A549 (cell line): ENCODE measurements at regions of chr2 and their contacts with region 1.

Region 1: DNA sequence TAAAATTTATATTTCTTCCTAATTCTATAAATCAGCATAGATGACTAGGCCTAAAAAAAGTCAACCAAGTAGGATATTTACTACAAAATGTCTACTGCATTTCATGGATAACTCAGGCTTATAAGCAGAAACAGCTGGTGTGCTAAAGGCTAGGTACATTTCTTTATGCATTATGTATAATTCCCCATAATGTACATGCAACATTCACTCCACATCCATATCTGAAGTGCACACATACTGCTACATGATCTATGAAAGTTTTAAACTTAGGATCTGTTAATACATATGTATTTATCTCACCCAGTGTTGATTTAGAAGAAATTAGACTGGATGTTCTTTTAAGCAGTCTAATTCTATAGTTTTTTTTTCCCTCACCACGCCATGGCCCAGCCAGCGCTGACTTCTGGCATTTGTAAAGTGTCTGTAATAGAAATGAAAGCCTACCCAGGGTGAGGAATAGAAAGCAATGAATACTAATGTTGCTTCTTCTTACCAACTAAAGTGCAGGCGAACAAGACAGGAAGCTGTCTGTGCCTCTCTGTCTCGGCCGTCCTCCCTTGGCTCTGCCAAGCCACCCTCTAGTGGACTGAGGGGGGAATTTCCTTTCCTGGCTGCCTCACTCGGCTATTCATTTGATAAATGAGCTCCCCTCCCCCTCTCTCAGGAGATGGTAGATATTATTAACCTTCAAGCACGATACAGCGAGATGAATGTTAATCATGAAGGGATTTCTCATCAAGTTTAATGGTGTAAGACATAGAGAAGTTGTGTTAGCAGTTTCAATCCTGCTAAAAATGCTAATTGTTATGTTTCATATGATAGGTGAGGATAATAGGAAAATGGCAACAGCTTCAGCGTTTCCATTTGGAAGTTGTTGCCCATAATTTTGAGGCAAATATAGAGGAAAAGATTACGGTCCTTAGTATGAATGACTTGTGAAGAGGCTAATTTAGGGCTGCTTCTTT is 384.5 kb downstream of the MTX2 start:
- DNase-seq: peak; percentile 44 to 74
- ATAC-seq: peak; percentile 97 to 98
- H3K4me3 ChIP-seq: no peak overlapping the region
- H3K27ac ChIP-seq: no peak overlapping the region
- H3K4me1 ChIP-seq: no peaks in the 10 kb centered on the region
- CTCF ChIP-seq: peak; percentile 53
- EP300 ChIP-seq: no peak
- POLR2A ChIP-seq: no peak
- RAD21 ChIP-seq: peak; percentile 38 to 49; a peak in 4 of 5 replicates

Region 2: DNA sequence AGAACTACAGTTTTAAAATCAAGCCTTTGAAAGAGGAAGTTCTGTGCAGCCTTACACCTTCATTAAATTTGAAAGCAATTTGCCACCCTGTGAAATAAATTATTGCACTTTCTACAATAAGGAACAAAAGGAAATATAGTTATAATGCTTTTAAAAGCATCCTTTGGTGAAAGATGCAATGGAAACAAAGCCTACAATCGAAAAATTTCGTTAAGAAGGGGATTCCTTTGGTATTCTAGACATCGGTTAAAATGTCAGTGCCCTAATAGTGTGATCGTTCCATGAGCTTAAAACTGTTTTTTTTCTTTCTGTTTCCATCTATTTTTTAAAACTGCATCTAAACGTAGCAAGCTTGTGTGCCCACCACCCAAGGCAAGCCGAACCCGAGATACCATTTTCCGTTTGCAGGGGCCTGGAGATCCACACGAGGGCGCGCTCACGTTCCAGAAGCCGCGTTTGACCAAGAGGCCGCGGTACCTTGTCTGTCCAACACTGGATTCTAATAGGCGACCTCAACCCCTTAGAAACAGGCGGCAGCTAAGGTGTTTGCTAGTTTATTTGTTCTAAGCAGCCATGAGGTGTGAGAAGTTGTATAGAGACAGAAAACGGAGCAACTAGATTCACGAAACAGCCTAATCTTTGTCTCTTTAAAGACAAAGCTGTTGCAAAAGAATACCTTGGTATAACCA is 542.6 kb before region 1 on chr2:
- CTCF ChIA-PET with region 1: interaction called, 12 read pairs
- POLR2A ChIA-PET with region 1: no interaction called
- DNase-seq: peak; percentile 68 to 76
- ATAC-seq: peak; percentile 12 to 67; a peak in 4 of 6 replicates
- H3K4me3 ChIP-seq: no peak overlapping the region
- H3K27ac ChIP-seq: no peak overlapping the region
- H3K4me1 ChIP-seq: peaks cover 9% of the 10 kb centered on the region
- CTCF ChIP-seq: peak; percentile 82
- EP300 ChIP-seq: no peak
- POLR2A ChIP-seq: no peak
- RAD21 ChIP-seq: peak; percentile 37; a peak in 3 of 5 replicates

Region 3: DNA sequence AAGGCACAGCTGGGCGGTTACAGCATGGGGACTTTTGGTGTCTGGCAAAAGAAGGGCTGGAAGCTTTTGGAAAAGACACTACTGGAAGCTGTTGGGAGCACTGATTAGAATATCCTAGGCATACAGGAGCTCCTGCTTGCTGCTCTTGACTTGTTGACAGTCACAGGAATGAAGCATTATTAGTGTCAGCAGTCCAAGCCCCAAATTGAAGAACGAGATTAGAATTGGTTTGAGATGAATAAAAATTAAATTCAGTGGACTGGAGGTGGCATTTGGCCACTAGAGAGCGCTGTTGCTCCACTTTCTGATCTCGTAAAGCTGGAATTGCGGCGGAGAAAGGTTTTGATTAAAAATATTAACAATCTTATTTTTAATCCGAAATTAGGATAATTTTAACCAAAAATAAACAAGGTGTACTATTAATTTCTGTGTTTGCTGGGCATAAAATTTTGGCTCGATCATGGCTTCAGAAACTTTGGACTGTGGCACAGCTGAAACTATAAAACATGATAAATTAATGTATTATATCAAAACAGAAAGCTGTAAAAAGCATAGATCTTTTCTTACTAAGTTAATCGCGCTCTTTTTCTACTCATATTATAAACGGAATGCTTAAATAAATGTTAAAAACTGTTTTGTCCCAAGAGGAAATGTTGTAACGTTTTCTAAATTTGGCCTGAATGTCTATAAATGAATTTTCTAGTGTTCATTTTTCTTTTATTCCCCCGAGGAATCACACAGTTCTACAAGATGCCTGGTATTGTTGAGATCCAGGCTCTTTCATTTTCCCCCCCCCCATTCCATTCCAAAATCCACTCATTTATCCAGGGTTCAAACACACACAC is 526.6 kb before region 1 on chr2:
- CTCF ChIA-PET with region 1: interaction called, 79 read pairs
- POLR2A ChIA-PET with region 1: interaction called, 4 read pairs
- DNase-seq: peak in 1 of 2 experiments; percentile 52
- ATAC-seq: 0 out of 6 replicates have a peak, but pooled peaks of 1 of the 2 experiments have one; percentile 10
- H3K4me3 ChIP-seq: no peak overlapping the region
- H3K27ac ChIP-seq: no peak overlapping the region
- H3K4me1 ChIP-seq: 0 out of 3 replicates have a peak, but pooled peaks cover 3% of the 10 kb centered on the region
- CTCF ChIP-seq: peak; percentile 96
- EP300 ChIP-seq: no peak
- POLR2A ChIP-seq: no peak
- RAD21 ChIP-seq: peak; percentile 87 to 91

Region 4: DNA sequence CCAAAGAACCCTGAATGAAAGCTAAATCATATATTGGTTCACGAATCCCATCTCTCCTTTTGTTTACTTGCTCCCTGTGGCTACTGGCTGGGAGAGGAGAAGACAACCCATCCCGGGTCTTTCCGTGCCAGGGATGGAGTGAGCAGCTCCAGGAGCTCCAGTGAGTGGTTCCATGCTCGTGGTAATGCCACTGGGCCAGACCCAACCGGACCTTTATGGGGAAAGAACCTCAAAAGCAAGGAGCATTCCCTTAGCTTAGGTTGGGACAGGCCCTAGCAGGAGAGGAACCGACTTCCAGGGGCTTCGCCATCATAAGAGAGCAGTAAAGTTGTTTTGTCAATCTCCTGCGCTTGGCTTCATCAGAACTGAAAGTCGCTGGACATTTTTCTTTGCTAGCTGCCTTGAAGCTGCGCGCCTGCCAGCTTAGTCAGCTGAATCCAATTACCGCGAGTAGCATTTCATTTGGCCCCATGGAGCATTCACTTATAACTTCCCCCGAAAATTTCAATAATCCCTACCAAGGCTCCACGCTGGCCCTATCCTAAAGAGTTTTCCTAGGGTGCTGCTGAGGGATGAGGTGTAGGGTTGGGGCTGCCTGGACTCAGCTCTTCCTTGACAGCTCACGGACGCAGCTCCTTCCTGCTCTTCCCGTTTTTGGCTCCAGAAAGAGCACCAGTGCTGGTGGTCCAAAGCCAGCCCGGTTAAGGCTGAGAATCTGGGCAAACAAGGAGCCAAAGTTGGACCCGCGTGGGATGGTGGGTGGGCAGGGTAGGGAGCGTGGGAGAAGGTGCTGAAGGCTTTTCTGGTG is 491.7 kb before region 1 on chr2:
- CTCF ChIA-PET with region 1: interaction called, 15 read pairs
- POLR2A ChIA-PET with region 1: no interaction called
- DNase-seq: no peak
- ATAC-seq: no peak; a peak in 1 of 6 replicates
- H3K4me3 ChIP-seq: no peak overlapping the region
- H3K27ac ChIP-seq: no peak overlapping the region
- H3K4me1 ChIP-seq: no peaks in the 10 kb centered on the region
- CTCF ChIP-seq: no peak
- EP300 ChIP-seq: no peak
- POLR2A ChIP-seq: no peak
- RAD21 ChIP-seq: no peak

Region 5: DNA sequence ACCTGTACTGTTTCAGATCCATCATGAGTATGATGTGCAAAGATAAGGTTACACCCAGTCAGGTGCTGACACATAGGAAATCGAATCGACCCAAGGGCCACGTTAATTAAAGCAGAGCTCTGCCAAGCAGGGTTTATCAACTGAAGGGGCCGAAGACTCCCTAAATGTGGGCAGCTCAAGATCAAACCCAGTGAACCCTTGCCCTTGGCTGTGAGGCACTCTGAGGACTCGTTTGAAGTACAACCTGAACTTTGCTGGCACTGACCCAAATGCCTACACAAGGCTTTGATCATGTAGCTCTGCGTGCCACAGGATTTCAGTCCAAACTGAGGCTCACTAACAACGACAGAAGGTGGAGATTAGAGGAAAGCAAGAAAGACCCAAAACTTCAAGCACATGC is 32.4 kb before region 1 on chr2:
- CTCF ChIA-PET with region 1: interaction called, 13 read pairs
- POLR2A ChIA-PET with region 1: no interaction called
- DNase-seq: no peak
- ATAC-seq: no peak
- H3K4me3 ChIP-seq: no peak overlapping the region
- H3K27ac ChIP-seq: no peak overlapping the region
- H3K4me1 ChIP-seq: no peaks in the 10 kb centered on the region
- CTCF ChIP-seq: no peak
- EP300 ChIP-seq: no peak
- POLR2A ChIP-seq: no peak
- RAD21 ChIP-seq: no peak

Region 6: GRCh38 chr2:176664478-176664877 is 10.7 kb after region 1 on chr2:
- CTCF ChIA-PET with region 1: interaction called, 45 read pairs
- POLR2A ChIA-PET with region 1: no interaction called
- DNase-seq: no peak
- ATAC-seq: no peak
- H3K4me3 ChIP-seq: no peak overlapping the region
- H3K27ac ChIP-seq: no peak overlapping the region
- H3K4me1 ChIP-seq: no peaks in the 10 kb centered on the region
- CTCF ChIP-seq: no peak
- EP300 ChIP-seq: no peak
- POLR2A ChIP-seq: no peak
- RAD21 ChIP-seq: no peak

Region 7: GRCh38 chr2:176733698-176734430 is 80.1 kb after region 1 on chr2:
- CTCF ChIA-PET with region 1: no interaction called
- POLR2A ChIA-PET with region 1: no interaction called
- DNase-seq: no peak
- ATAC-seq: no peak
- H3K4me3 ChIP-seq: no peak overlapping the region
- H3K27ac ChIP-seq: no peak overlapping the region
- H3K4me1 ChIP-seq: no peaks in the 10 kb centered on the region
- CTCF ChIP-seq: no peak
- EP300 ChIP-seq: no peak
- POLR2A ChIP-seq: no peak
- RAD21 ChIP-seq: no peak

Region 8: DNA sequence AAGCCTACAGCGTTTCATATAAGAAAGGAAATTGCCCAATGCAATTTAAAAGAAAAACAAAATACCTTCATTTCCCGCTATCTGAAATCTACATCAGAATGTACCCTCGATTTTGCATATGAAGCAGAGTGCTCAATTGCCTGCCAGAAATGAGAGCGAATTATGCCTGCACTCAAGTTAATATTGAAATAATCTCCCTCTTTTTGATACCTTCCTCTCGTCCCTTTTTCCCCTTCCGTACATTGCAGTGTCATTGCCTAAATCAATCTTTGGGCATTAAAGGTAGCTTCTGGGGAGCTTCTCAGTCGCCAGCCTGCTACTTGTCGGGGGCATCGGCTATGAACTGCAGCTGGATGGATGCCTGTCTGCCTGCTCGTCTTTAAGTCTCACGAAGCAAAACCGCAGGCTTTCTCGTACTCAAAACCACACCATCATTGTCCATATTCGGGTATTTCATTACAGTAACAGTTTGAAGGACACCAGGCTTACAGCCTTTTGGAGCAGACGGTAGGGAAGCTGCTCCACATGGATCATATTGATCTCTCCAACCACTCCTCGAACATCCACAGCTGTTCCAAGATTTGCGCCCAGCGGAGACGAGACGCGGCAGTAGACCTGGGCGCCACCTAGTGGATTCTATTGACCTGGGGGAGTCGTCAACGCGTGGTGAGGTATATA is 494.9 kb after region 1 on chr2:
- CTCF ChIA-PET with region 1: interaction called, 16 read pairs
- POLR2A ChIA-PET with region 1: no interaction called
- DNase-seq: peak; percentile 61 to 75
- ATAC-seq: peak; percentile 99
- H3K4me3 ChIP-seq: peak overlapping the region; percentile 48
- H3K27ac ChIP-seq: no peak overlapping the region
- H3K4me1 ChIP-seq: peaks cover 9% of the 10 kb centered on the region; the same call in 1 of the 3 replicates
- CTCF ChIP-seq: peak; percentile 85
- EP300 ChIP-seq: no peak
- POLR2A ChIP-seq: no peak
- RAD21 ChIP-seq: peak; percentile 63 to 68